Heart left ventricle (tissue), 16 donors: ENCODE measurements at regions of chr17 and their contacts with region 1.

Region 1: DNA sequence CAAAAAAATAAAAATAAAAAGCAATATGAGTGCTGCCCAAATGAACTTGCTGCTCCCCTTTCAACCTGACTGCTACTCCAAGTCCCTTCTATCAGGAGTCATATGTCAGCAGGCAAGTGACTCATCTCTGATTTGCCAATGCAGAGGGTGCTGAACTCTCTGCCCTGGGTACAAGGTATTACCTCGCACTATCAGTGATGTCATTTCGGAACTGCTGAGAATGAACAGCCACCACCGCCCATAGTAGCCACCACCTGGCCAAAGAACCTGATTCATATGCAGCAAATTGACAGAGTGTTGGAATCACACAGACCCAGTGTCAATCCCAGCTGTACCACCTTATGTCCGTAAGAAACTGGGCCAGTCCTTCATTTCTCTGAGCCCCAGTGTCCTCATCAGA is 31.2 kb downstream of the LYRM9 start:
- DNase-seq: no peak
- ATAC-seq: no peak
- H3K4me3 ChIP-seq: no peak overlapping the region
- H3K27ac ChIP-seq: no peak overlapping the region
- H3K4me1 ChIP-seq: no peaks in the 10 kb centered on the region
- H3K27me3 ChIP-seq: no peaks in the 10 kb centered on the region
- CTCF ChIP-seq: no peak
- POLR2A ChIP-seq: no peak

Region 2: GRCh38 chr17:27666831-27667560 is 195.0 kb before region 1 on chr17:
- intact Hi-C with region 1: loop called in 1 of 10 experiments (anchors 10 kb)
- DNase-seq: no peak
- ATAC-seq: no peak
- H3K4me3 ChIP-seq: no peak overlapping the region
- H3K27ac ChIP-seq: no peak overlapping the region
- H3K4me1 ChIP-seq: no peaks in the 10 kb centered on the region
- H3K27me3 ChIP-seq: no peaks in the 10 kb centered on the region
- CTCF ChIP-seq: no peak
- POLR2A ChIP-seq: no peak

Region 3: DNA sequence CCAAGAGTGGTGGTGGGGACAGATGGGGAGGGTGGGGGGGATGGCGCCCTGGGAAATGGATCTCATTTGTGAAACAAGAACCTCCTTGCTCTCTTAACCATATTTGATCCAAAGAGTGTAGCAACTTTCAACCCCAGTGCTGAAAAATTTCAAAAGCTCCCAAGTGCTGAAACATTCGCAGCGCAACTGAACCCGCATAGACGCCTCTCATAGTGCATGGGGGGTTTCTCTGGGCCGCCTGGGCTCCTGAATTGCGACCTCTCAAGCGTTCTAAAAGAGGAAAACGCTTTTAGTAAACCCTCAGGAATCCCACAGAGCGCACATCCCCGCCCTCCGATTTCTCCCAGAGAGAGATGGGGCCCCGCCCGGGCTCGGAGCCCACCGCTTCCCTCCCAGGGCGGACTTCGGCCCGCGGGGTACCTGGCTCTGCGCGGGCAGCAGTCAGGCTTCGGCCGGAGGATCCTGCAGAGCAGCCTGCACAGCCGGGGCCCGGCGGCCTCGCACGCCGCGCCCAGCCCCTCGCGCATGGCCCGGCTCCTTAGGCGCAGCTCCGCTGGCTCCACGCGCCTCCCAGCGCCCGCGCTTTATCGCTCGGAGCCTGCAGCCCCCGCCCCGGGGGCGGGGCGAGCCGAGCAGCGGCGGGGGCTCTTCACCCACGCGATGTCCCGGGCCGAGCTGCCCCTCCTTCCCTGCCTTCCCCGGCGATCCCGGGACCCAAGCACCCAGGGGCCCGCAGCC is 68.7 kb before region 1 on chr17:
- intact Hi-C with region 1: no loop called
- DNase-seq: peak; percentile 22 to 75 (median 43)
- ATAC-seq: peak in 3 of 4 donors; percentile 69 to 88 (median 73)
- H3K4me3 ChIP-seq: peak overlapping the region; percentile 7 to 57 (median 46)
- H3K27ac ChIP-seq: no peak overlapping the region
- H3K4me1 ChIP-seq: peaks cover 0 to 12% (median 9%) of the 10 kb centered on the region in 12 donors
- H3K27me3 ChIP-seq: peaks cover 0 to 27% (median 13%) of the 10 kb centered on the region in 9 donors
- CTCF ChIP-seq: peak in 1 of 12 donors; percentile 3
- POLR2A ChIP-seq: no peak